ENCODE measurements at regions of chr9 and their contacts with region 1.

Region 1: GRCh38 chr9:74117731-74118130 is 379.4 kb upstream of the RORB start:
- DNase-seq: no peak
- H3K4me3 Mint-ChIP-seq: no peak overlapping the region
- H3K27ac Mint-ChIP-seq: no peak overlapping the region
- H3K4me1 Mint-ChIP-seq: no peaks in the 10 kb centered on the region
- H3K27me3 Mint-ChIP-seq: peaks cover 12% of the 10 kb centered on the region
- CTCF ChIP-seq: no peak

Region 2: DNA sequence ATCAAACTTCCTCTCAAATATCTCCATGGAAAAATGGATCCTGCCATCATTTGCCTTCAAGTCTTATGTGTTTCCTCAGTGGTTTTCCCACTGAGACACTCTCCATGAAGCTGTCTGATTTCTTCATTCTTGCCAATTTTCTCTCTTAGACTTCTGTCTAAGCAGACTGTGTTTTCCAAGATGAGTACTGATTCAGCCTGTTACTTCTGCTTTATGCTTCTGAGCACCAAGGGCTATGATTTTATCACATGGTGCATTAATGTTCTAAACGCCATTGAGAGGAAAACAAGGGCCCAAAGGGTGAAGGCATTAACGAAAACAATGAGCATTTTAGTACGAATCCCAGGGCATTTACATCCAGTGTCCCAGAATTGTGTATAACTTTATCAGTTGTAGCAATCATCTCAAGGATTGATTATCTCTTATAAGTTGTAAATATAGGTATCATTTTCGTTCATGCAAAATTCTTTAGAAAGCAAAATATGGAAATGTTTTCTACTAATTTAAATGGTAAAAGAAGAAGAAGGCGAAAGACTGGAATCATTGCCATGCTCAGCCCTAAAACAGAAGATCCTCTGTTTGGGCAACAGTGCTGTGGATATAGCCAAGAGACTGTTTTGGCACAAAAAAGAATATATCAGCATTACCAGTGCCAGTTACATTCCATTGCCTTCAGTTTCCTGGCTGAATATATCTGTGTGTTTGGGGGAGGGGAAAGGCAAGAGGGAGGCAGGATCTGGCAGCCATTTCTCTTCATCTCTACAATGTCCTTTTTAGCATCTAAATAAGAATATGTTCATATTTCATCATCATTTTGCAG is 428.5 kb before region 1 on chr9:
- CTCF ChIA-PET with region 1: no interaction called
- POLR2A ChIA-PET with region 1: no interaction called
- intact Hi-C with region 1: loop called (anchors 10 kb)
- DNase-seq: no peak
- H3K4me3 Mint-ChIP-seq: no peak overlapping the region
- H3K27ac Mint-ChIP-seq: no peak overlapping the region
- H3K4me1 Mint-ChIP-seq: peaks cover 7% of the 10 kb centered on the region
- H3K27me3 Mint-ChIP-seq: peaks cover 4% of the 10 kb centered on the region
- CTCF ChIP-seq: no peak